Psoas muscle (tissue), 8 donors: ENCODE measurements at regions of chr9 and their contacts with region 1.

Region 1: DNA sequence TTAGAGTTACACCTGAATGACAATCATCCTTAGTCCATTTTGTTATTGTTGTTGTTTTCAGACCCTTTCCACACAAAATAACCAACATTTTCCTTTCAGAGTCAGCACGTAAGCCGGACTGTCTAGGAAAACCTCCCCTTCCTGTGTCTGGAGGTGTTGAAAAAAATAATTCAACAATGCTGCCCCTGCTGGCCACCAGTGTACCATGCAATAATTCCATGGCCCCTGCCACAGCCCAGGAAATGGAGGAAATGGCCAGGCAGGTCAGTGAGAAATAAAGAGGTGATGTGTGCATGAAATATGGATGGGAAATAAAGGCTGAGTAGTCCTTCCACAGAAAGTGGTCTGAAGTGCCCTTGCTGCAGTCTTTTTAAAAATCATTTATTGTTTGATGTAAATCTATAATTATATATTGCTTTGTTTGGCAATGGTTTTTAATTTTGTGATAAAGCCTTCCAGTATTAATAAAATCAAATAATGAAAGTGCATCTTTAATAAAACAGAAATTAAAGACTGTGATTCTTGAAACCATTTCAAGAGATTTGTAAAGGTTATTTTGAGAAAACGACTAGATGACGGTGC is 152.8 kb upstream of the PAPPA start:
- DNase-seq: no peak
- ATAC-seq: peak; percentile 42 to 72 (median 60)
- H3K4me3 ChIP-seq: no peak overlapping the region
- H3K27ac ChIP-seq: no peak overlapping the region
- H3K4me1 ChIP-seq: peaks cover 21% of the 10 kb centered on the region
- H3K27me3 ChIP-seq: no peaks in the 10 kb centered on the region
- CTCF ChIP-seq: peak; percentile 47

Region 2: GRCh38 chr9:116055541-116055940 is 54.7 kb after region 1 on chr9:
- intact Hi-C with region 1: no loop called
- DNase-seq: no peak
- ATAC-seq: no peak
- H3K4me3 ChIP-seq: no peak overlapping the region
- H3K27ac ChIP-seq: no peak overlapping the region
- H3K4me1 ChIP-seq: no peaks in the 10 kb centered on the region
- H3K27me3 ChIP-seq: no peaks in the 10 kb centered on the region
- CTCF ChIP-seq: no peak

Region 3: DNA sequence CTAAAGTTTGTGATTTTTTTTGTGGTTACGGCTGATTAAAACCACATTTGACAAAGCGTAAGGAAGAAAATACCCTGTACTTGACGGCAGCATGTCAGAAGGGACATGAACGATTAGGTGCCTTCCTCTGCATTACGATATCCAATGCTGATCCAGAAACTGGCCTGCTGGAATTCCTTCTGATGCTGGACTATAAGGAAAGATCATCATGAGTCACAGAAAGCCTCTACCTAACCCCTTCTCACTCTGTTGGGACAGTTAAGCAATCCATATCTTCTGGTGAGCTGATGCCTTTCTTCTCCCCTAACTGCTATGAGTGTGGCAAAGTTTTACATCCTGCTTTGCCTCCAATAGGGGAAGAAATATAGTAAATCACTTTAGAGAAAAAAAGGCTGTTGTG is 74.4 kb after region 1 on chr9:
- intact Hi-C with region 1: no loop called
- DNase-seq: no peak
- ATAC-seq: no peak
- H3K4me3 ChIP-seq: no peak overlapping the region
- H3K27ac ChIP-seq: no peak overlapping the region
- H3K4me1 ChIP-seq: no peaks in the 10 kb centered on the region
- H3K27me3 ChIP-seq: no peaks in the 10 kb centered on the region
- CTCF ChIP-seq: no peak

Region 4: DNA sequence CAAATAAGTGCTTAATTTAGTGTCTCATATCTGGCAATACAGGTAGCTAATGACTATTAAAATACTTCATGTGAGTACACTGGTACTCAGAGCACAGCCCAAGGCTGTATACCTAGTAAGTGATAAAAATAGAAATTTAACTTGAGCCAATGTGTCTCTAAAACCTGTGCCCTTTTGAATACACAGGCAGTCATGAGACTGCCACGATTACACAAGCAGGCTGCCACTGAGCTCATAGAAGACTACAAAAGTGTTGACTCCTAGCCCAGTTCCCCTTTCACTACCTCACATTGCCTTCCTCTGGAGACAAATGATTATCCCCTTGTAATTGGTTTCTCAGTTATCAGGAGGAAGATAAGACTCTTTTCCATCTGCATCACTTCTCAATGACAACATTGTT is 86.4 kb after region 1 on chr9:
- intact Hi-C with region 1: loop called in 1 of 2 experiments (anchors 5 kb)
- DNase-seq: peak; percentile 35 to 64
- ATAC-seq: peak; percentile 95 to 98 (median 96)
- H3K4me3 ChIP-seq: no peak overlapping the region
- H3K27ac ChIP-seq: peak overlapping the region; percentile 59
- H3K4me1 ChIP-seq: peaks cover 23% of the 10 kb centered on the region
- H3K27me3 ChIP-seq: no peaks in the 10 kb centered on the region
- CTCF ChIP-seq: no peak

Region 5: GRCh38 chr9:116156621-116157314 is 155.9 kb after region 1 on chr9:
- intact Hi-C with region 1: loop called in 1 of 2 experiments (anchors 5 kb)
- DNase-seq: peak; percentile 64 to 86
- ATAC-seq: peak; percentile 92 to 98 (median 94)
- H3K4me3 ChIP-seq: peak overlapping the region; percentile 53
- H3K27ac ChIP-seq: peak overlapping the region; percentile 73
- H3K4me1 ChIP-seq: peaks cover 17% of the 10 kb centered on the region
- H3K27me3 ChIP-seq: peaks cover 0 to 35% (median 3%) of the 10 kb centered on the region in 3 donors
- CTCF ChIP-seq: peak; percentile 7